ENCODE measurements at regions of chr6 and their contacts with region 1.

Region 1: DNA sequence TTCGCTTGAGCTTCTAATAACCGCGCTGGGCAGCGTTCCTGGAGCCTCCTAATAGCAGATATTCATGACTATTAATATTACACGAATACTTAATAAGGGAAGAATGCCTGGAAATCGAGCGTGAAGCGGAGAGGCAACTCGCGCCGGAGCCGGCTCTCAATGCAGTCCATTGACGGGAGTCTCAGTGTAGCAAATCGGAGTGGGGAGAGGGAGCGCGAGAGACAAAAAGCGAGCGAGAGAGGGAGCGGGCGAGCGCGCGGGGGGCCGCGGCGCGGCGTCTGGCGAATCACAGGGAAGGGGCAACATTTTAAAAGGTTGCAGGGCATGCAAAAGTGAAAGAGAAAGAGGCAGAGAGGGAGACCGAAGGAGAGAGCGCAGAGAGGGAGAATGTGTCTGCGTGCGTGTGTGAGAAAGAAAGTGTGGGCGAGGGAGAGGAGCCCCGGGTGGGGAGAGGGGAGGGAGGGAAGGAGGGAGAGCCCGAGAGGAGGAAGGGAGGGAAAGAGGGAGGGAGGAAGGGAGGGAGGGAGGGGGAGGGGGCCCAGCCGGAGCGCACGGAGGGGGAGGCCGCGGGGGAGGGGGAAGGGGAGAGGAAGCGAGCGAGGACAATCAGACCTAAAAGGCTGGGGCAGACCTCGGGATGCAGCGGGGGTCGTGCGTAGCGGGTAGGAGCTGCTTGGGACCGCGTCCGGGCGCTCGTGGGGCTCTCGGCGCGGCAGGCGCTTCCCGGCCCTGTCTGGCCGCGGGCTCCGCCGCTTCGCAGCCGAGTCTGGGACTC is 2.7 kb downstream of the TFAP2A start:
- DNase-seq: peak in 2 of 5 donors; percentile 57 to 68
- ATAC-seq: peak in 3 of 4 donors; percentile 37 to 62 (median 52)
- H3K4me3 ChIP-seq: peak overlapping the region; percentile 34 to 86 (median 61)
- H3K27ac ChIP-seq: peak overlapping the region in 1 of 12 donors; percentile 62
- H3K4me1 ChIP-seq: peaks cover 0 to 52% (median 33%) of the 10 kb centered on the region in 12 donors
- H3K27me3 ChIP-seq: peaks cover 59 to 99% (median 95%) of the 10 kb centered on the region in 9 donors
- CTCF ChIP-seq: no peak
- POLR2A ChIP-seq: no peak

Region 2: GRCh38 chr6:10030942-10031537 is 381.1 kb before region 1 on chr6:
- intact Hi-C with region 1: loop called in 1 of 10 experiments (anchors 10 kb)
- DNase-seq: no peak
- ATAC-seq: no peak
- H3K4me3 ChIP-seq: no peak overlapping the region
- H3K27ac ChIP-seq: no peak overlapping the region
- H3K4me1 ChIP-seq: no peaks in the 10 kb centered on the region
- H3K27me3 ChIP-seq: peaks cover 0 to 14% (median 0%) of the 10 kb centered on the region in 9 donors
- CTCF ChIP-seq: peak in 11 of 12 donors; percentile 14 to 51 (median 40)
- POLR2A ChIP-seq: no peak